GM10248 (cell line): ENCODE measurements at regions of chr1 and their contacts with region 1.

Region 1: DNA sequence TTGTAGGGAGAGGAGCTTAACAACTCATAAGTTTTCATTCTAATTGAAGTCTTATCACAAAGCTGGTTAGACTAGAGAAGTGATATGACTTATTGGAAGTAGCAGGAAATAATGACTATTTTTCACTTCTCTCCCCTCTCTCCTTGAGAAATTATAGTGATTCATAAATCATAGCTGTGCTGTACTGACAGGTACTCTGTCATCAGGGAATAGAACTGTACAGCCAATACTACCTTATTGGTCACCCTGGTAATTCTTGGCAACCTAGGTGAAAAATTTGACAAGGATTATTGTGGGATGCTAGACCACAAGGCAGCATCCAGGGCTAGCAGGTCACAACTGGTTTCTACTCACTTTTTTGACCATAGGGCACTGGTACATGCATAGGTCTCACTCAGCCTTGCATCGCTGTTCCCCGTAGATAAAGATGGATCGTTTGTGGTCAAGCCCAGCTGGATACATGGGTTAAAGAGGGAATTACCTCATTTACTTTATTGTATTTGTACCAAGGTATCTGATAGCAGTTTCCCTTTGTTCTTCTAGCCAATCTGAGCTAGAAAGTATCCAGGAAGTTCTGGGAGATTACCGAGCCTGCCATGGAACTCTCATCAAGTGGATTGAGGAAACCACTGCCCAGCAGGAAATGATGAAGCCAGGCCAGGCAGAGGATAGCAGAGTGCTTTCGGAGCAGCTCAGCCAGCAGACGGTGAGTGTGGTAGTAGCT is 113.6 kb downstream of the MACF1 start:
- DNase-seq: no peak
- CTCF ChIP-seq: no peak

Region 2: DNA sequence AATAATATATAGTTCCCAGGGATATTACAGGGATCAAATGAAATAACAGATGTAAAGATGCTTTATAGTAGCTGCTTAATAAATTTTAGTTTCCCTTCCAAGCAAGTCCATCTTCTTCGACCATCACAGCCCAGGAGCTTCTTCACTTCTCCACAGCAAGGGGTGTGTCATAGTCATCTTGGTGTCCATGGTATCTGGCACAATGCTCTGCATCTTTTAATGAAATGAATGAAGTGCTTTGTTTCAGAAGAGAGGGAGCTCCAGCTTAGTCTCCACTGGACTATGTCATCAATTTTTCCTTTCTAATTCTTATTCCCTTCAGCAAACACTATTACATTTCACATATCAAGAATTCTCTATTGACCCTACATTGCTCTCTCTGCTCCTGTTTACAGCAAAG is 118.5 kb before region 1 on chr1:
- CTCF ChIA-PET with region 1: no interaction called
- POLR2A ChIA-PET with region 1: no interaction called
- DNase-seq: no peak
- CTCF ChIP-seq: no peak

Region 3: DNA sequence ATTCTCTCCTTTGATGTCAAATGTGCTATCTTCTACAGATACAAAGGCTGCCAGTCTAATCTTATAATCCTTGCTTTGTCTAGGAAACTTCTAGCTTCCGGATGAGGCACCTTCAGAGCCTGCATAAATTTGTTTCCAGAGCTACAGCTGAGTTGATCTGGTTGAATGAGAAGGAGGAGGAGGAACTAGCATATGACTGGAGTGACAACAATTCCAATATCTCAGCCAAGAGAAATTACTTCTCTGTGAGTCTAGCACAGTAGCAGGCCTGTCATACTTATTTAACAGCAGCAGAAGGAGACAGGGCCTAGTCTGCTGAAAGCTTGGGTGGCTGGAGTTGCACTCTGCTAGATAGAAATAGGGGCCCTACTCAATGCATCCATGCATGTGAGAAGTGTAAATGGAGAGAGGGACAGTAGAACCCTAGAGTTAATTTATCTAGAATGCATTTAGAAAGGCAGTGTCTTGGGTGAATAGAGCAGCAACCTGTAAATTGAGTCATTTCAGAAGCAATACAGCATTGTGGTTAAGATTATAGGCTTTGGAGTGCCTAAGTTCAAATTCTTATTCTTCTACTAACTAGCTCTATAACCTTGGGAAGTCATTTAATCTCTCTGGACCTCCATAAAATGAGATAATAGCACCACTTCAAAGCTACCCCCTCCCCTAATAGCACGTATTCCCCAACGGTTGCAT is 24.5 kb before region 1 on chr1:
- CTCF ChIA-PET with region 1: no interaction called
- POLR2A ChIA-PET with region 1: no interaction called
- DNase-seq: no peak
- CTCF ChIP-seq: no peak

Region 4: GRCh38 chr1:39328095-39328494 is 10.0 kb after region 1 on chr1:
- CTCF ChIA-PET with region 1: interaction called, 10 read pairs
- POLR2A ChIA-PET with region 1: no interaction called
- DNase-seq: no peak
- CTCF ChIP-seq: no peak

Region 5: DNA sequence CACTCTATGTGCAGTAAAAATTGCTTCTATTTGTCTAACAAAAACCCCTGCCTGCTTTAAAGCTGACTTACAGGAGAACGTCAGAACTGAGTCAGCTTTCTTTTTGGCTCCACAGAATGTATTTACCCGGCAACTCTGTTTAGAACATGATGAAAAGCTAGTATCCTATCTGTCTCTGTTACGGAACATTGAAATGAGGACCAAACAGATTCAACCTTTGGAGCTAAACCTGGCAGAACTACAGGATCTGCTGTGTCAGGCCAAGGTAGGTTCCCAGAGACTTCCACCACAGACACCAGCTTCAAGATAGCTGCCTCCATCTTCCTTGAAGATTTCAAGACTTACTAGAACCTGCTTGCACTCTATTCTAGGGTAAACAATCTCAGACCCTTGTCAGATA is 19.0 kb after region 1 on chr1:
- CTCF ChIA-PET with region 1: interaction called, 13 read pairs
- POLR2A ChIA-PET with region 1: no interaction called
- DNase-seq: no peak
- CTCF ChIP-seq: no peak

Region 6: GRCh38 chr1:39391691-39392679 is 73.9 kb after region 1 on chr1:
- CTCF ChIA-PET with region 1: no interaction called
- POLR2A ChIA-PET with region 1: no interaction called
- DNase-seq: no peak
- CTCF ChIP-seq: no peak